Right cardiac atrium (tissue), 5 donors: ENCODE measurements at regions of chr1 and their contacts with region 1.

Region 1: DNA sequence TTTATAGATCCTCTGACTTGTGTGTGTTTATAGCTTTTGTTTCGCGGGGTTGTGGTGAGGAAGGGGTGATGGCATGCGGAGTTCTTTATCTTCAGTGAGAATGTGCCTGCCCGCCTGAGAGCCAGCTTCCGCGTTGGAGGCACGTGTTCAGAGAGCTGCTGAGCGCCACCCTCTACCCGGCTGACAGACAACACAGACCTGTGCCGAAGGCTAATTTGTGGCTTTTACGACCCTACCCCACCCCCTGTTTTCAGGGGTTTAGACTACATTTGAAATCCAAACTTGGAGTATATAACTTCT is 14.4 kb upstream of the CD101 start:
- DNase-seq: peak in 1 of 3 donors; percentile 60
- ATAC-seq: no peak
- H3K4me3 ChIP-seq: no peak overlapping the region
- H3K27ac ChIP-seq: no peak overlapping the region
- H3K4me1 ChIP-seq: peaks cover 12% of the 10 kb centered on the region
- H3K27me3 ChIP-seq: no peaks in the 10 kb centered on the region

Region 2: GRCh38 chr1:116951200-116951935 is 35.8 kb before region 1 on chr1:
- intact Hi-C with region 1: loop called in 1 of 4 experiments (anchors 5 kb)
- DNase-seq: peak; percentile 67 to 74 (median 73)
- ATAC-seq: peak; percentile 47 to 65
- H3K4me3 ChIP-seq: no peak overlapping the region
- H3K27ac ChIP-seq: peak overlapping the region; percentile 97
- H3K4me1 ChIP-seq: peaks cover 2% of the 10 kb centered on the region
- H3K27me3 ChIP-seq: no peaks in the 10 kb centered on the region

Region 3: GRCh38 chr1:117093870-117094621 is 106.8 kb after region 1 on chr1:
- intact Hi-C with region 1: no loop called
- DNase-seq: no peak
- ATAC-seq: peak in 1 of 2 donors; percentile 61
- H3K4me3 ChIP-seq: no peak overlapping the region
- H3K27ac ChIP-seq: no peak overlapping the region
- H3K4me1 ChIP-seq: no peaks in the 10 kb centered on the region
- H3K27me3 ChIP-seq: no peaks in the 10 kb centered on the region